ENCODE measurements at regions of chr16 and their contacts with region 1.

Region 1: DNA sequence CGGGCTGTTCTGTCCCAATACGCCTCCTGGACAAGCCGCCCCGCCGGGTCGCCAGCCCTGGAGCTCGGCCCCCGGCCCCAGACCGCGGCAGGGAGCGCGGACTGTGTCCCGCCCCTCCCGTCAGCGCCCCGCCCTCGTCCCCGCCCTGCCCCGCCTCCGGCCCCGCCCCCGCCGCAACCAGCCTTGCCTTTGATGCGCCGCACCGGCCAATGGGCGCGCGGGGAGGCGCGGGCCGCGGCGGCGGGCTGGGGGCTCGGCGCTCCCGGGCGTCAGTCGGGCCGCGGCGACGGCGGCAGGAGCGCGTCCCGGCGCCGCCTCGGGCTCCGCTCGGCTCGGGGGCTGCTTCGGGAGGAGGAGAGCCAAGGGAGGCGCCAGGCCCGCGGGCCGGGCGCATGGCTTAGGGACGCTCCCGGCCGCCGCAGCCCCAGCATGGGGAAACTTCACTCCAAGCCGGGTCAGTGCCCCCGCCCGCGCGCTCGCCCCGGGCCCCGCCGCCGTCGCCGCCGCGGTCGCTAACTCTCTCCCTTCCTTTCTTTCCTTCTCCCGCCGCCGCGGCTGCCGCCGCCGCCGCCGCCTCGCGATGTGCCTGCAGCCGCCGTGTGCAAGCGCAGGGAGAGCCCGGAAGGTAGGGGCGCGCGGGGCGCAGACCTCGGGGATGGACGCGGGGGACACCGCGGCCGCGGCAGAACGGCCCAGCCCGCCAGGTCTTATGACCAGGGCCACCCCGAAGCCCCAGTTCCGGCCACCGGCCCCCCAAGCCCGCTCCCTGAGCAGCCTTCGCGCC is at the start of gene NKD1:
- DNase-seq: peak in 1 of 2 donors; percentile 86
- H3K4me3 ChIP-seq: peak within 1 kb of the TSS; percentile 67 to 82
- H3K27ac ChIP-seq: peak within 1 kb of the TSS; percentile 71 to 82
- H3K4me1 ChIP-seq: peaks cover 2 to 13% of the 10 kb centered on the region in 2 donors
- H3K27me3 ChIP-seq: no peaks in the 10 kb centered on the region
- CTCF ChIP-seq: no peak
- total RNA-seq, gene NKD1: 33.2 TPM

Region 2: GRCh38 chr16:50497592-50497991 is 50.7 kb before region 1 on chr16:
- intact Hi-C with region 1: loop called (anchors 2 kb)
- DNase-seq: peak in 1 of 2 donors; percentile 86
- H3K4me3 ChIP-seq: no peak overlapping the region
- H3K27ac ChIP-seq: peak overlapping the region; percentile 83 to 86
- H3K4me1 ChIP-seq: peaks cover 0 to 38% of the 10 kb centered on the region in 2 donors
- H3K27me3 ChIP-seq: no peaks in the 10 kb centered on the region
- CTCF ChIP-seq: no peak

Region 3: GRCh38 chr16:50585331-50585776 is 37.0 kb after region 1 on chr16:
- intact Hi-C with region 1: loop called (anchors 2 kb)
- DNase-seq: peak in 1 of 2 donors; percentile 93
- H3K4me3 ChIP-seq: peak overlapping the region; percentile 0 to 28
- H3K27ac ChIP-seq: peak overlapping the region; percentile 84 to 86
- H3K4me1 ChIP-seq: peaks cover 24 to 53% of the 10 kb centered on the region in 2 donors
- H3K27me3 ChIP-seq: no peaks in the 10 kb centered on the region
- CTCF ChIP-seq: no peak

Region 4: DNA sequence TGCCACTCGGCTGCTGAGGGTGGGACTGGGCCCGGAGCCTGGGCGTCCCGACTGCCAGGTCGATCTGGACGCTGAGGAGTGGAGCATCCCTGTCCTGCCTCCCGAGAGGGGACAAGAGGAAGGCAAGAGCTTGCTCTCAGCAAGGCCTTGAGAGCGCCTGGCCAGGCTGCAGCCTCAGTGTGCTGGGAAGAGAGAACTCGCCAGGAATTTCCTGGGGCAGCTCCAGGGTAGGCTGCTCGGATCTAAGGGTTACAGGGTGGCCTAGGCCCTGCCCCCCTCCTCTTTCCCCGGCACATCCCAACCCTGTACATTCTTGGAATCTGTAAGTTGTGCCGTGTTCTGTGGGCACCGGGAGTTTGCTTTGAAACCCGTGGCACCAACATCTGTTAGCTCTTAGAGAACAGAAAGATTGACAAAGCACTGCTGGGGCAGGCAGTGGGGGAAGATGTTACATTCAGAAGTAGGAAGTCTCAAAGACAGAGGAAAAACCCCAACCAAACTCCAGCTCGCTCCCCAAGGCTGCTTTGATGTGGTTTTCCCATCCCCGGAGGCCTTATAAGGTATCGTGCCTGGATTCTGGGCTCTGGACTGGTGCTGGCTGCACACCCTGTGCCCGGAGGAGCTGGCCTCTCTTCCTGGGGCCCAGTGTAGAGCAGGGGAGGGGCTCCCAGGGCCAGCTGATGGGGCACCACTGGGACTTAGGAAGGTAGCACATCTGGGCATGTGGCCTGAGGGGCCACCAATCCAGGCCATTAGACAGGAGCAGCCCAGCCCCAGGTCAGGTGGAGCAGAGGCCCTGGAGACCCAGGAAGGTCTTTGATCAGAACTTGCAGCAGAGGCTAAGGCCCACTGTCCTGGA is 55.1 kb after region 1 on chr16:
- intact Hi-C with region 1: no loop called
- DNase-seq: peak; percentile 54 to 84
- H3K4me3 ChIP-seq: peak overlapping the region in 1 of 2 donors; percentile 36
- H3K27ac ChIP-seq: peak overlapping the region; percentile 85 to 93
- H3K4me1 ChIP-seq: peaks cover 40 to 65% of the 10 kb centered on the region in 2 donors
- H3K27me3 ChIP-seq: no peaks in the 10 kb centered on the region
- CTCF ChIP-seq: no peak

Region 5: DNA sequence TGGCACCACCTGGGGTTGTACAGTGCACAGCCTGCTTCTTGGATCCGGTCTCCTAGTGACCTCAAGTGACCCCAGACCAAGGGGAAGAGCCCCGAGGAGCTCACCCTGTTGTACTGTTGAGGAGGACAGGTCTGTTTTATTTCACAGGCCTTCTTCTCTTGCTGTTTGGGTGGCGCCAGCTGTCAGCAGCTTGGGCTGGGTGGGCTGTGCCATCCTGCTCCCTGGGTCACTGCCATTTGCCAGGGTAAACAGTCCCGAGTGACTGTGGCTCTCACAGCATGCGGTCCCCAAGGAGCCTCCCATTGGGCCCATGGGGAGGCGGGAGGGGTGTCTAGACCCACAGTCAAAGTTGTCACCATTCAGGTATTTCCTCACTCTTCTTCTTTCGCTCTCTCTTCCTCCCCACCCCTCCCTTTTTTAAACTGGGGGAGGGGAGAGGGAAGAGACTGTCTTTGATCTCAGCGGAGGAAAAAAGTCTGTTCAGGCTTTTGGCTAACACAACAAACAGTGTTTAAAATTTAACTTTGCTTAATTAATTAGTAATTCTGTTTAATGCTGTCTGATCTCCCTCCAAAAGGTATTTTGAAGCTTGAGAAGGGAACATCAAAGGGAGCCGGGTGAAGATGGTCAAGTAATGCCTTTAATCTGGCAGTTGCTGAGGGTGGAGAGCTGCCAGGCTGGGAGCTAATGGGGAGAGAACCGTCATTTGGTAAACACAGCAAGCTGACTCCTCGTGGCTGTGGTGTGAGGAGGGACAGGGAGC is 68.7 kb after region 1 on chr16:
- intact Hi-C with region 1: no loop called
- DNase-seq: no peak
- H3K4me3 ChIP-seq: no peak overlapping the region
- H3K27ac ChIP-seq: no peak overlapping the region
- H3K4me1 ChIP-seq: peaks cover 10 to 30% of the 10 kb centered on the region in 2 donors
- H3K27me3 ChIP-seq: no peaks in the 10 kb centered on the region
- CTCF ChIP-seq: no peak

Region 6: GRCh38 chr16:50627419-50627818 is 79.1 kb after region 1 on chr16:
- intact Hi-C with region 1: loop called (anchors 2 kb)
- DNase-seq: peak in 1 of 2 donors; percentile 87
- H3K4me3 ChIP-seq: peak overlapping the region in 1 of 2 donors; percentile 10
- H3K27ac ChIP-seq: peak overlapping the region; percentile 57 to 63
- H3K4me1 ChIP-seq: peaks cover 4 to 12% of the 10 kb centered on the region in 2 donors
- H3K27me3 ChIP-seq: no peaks in the 10 kb centered on the region
- CTCF ChIP-seq: peak; percentile 44 to 68 (median 49)

Region 7: DNA sequence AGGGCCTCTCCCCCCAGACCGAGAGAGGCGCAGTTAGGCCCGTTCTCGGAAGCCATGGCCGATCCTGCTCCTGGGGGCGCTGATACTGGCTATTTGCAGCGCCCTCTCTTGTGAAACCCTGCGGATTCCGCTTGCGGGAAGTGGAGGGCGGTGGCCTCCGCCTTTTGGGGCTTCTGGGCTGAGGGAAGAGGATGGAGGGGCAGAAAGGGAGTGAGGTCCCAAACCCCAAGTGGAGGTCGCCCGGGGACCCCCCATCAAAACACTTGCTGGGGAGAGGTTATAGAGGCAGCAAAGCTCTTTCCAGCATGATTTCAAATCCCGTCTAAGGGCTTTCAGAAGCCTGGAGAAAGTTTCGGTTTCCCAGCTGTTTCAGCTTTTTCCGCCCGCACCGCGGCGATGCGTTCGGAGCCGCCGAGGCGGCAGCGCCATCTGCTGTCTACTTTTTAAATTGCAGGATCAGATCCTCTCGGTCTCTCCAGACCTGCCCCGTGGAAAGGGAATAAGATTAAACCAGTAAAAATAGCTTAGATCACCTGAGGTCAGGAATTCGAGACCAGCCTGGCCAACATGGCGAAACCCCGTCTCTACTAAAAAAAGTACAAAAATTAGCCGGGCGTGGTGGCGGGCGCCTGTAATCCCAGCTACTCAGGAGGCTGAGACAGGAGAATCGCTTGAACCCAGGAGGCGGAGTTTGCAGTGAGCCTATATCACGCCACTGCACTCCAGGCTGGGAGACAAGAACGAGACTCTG is 117.0 kb after region 1 on chr16:
- intact Hi-C with region 1: loop called (anchors 2 kb)
- DNase-seq: peak in 1 of 2 donors; percentile 88
- H3K4me3 ChIP-seq: peak overlapping the region; percentile 41 to 61
- H3K27ac ChIP-seq: peak overlapping the region; percentile 58 to 65
- H3K4me1 ChIP-seq: peaks cover 0 to 5% of the 10 kb centered on the region in 2 donors
- H3K27me3 ChIP-seq: no peaks in the 10 kb centered on the region
- CTCF ChIP-seq: peak; percentile 82 to 93 (median 83)

Region 8: GRCh38 chr16:50741808-50742575 is 193.7 kb after region 1 on chr16 and contains the start of gene CYLD:
- intact Hi-C with region 1: loop called (anchors 2 kb)
- DNase-seq: peak; percentile 99 to 100
- H3K4me3 ChIP-seq: peak within 1 kb of the TSS; percentile 69 to 93
- H3K27ac ChIP-seq: peak within 1 kb of the TSS; percentile 86
- H3K4me1 ChIP-seq: peaks cover 0 to 12% of the 10 kb centered on the region in 2 donors
- H3K27me3 ChIP-seq: no peaks in the 10 kb centered on the region
- CTCF ChIP-seq: no peak
- total RNA-seq, gene CYLD: 33.2 TPM

Measured in ascending aorta (tissue), 2 donors.